ENCODE measurements at regions of chr1 and their contacts with region 1.

Region 1: DNA sequence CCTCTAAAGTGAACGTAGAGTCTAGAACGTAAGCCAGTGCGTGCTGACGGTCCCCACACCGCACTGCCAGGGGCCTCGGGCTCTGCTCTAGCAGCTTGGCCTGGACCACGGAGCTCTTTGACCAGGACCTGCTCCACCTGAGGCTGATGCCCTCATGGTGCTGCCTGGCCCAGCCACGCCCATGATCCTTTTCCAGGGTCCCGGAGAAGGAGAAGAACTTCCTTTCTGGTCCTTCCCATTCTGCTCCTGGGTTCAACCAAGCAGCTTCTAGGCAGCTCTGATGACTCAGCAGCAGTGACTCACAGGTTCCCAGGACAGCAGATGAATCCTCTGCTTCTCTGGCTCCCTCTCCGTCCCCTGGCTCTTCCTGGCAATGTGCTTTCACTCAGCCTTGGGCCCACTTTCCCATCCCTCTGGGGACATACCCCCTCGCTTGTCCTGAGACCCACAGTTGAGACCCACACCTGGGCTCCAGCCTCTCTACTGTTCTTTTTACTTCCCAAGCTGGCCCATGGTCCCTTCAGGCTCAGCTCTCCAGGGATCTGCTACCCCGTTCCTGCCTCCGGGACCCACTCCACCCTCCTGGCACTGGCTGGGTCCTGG is 246.3 kb upstream of the RAB4A start:
- DNase-seq: peak; percentile 98
- H3K4me3 Mint-ChIP-seq: no peak overlapping the region
- H3K27ac Mint-ChIP-seq: peak overlapping the region; percentile 21
- H3K4me1 Mint-ChIP-seq: peaks cover 25% of the 10 kb centered on the region
- H3K27me3 Mint-ChIP-seq: peaks cover 11% of the 10 kb centered on the region
- CTCF ChIP-seq: no peak

Region 2: DNA sequence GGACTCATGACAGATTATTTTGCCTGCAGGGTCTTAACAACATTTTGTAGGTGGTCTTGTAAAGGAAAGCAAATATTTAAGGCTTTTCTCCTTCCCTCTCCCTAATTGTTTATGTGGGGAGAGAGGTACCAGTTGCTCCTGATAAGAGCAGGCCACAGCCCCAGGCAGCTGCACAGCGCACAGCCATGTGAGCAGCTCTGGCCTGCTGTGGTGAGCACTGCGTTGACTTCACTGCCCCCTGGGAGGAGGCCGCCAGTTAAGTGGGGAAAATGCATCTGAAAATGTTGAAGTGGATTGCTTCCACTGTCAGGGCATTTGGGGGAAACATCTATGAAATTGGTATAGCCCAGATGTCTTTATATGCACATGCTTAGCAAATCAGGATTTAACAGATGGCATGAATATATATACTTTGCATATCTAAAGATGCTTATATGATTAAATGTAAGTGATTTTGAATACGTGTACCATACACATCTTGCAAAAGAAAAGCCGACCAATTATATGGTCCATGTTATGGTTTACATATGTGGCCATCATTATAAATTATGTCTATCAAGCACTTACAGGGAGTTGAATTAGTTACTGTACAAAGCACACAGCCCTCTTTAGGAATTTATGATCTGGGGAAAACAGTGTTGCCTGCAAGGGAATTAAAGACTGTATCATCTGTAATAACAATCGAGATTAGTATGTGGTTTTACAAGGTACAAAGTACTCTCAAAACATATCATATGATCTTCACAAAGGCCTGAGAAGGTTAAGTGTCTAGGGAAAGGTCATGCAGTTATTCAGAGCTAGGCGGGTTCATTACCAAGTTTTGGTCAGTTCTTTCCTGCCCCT is 157.3 kb before region 1 on chr1:
- CTCF ChIA-PET with region 1: no interaction called
- POLR2A ChIA-PET with region 1: no interaction called
- intact Hi-C with region 1: no loop called
- DNase-seq: no peak
- H3K4me3 Mint-ChIP-seq: no peak overlapping the region
- H3K27ac Mint-ChIP-seq: no peak overlapping the region
- H3K4me1 Mint-ChIP-seq: peaks cover 6% of the 10 kb centered on the region
- H3K27me3 Mint-ChIP-seq: peaks cover 35% of the 10 kb centered on the region
- CTCF ChIP-seq: no peak

Region 3: DNA sequence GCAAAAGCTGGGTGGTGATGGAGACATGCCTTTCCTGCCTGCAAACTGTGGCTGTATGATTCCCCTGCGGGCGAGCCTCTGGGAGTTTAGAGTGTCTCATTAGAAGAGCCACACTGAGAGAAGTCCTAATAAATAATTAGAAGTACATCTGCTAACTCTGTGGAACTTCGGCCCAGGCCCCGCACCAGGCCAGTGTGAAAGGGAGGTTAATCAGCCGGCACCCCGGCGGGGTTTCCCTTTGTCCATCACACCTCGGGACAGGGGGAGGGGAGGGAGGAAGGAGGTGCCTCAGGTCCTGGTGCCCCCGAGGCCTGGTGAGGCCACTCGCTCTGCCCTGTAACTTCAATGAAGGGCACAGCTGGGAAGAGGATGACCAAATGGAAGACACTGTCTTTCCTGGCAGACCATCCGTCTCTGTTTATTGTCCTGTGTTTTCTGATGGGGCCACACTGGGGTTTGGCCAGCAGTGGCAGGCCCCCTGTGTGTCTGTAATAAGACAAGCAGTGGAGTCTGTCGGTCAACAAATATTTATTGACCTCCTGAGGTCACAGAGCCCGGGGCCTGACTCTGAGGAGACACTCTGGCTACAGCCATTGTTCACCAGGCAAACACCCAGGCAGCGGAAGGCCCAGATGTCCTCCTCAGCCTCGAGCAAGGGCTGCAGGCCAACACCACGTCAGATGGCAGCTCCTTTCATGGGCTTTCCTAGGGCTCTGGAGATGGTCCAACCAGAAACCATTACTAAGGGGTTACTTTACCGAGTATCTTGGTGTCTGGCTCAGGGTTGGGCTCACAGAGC is 21.2 kb before region 1 on chr1:
- CTCF ChIA-PET with region 1: interaction called, 11 read pairs
- POLR2A ChIA-PET with region 1: interaction called, 6 read pairs
- intact Hi-C with region 1: no loop called
- DNase-seq: peak; percentile 56
- H3K4me3 Mint-ChIP-seq: no peak overlapping the region
- H3K27ac Mint-ChIP-seq: no peak overlapping the region
- H3K4me1 Mint-ChIP-seq: peaks cover 19% of the 10 kb centered on the region
- H3K27me3 Mint-ChIP-seq: no peaks in the 10 kb centered on the region
- CTCF ChIP-seq: no peak